T-cell (primary cell): ENCODE measurements at regions of chrX and their contacts with region 1.

Region 1: GRCh38 chrX:68828740-68829552 is at the start of gene EFNB1:
- DNase-seq: peak; percentile 62 to 90 (median 81)
- ATAC-seq: peak; percentile 89 to 94 (median 92)
- H3K4me3 ChIP-seq: peak within 1 kb of the TSS; percentile 75 to 79
- H3K4me3 Mint-ChIP-seq: peak within 1 kb of the TSS; percentile 86 to 93 (median 87)
- H3K27ac ChIP-seq: no peak within 1 kb of the TSS
- H3K27ac Mint-ChIP-seq: peak within 1 kb of the TSS; percentile 76 to 87
- H3K4me1 ChIP-seq: peaks cover 0 to 32% of the 10 kb centered on the region in 2 experiments
- H3K4me1 Mint-ChIP-seq: peaks cover 20 to 27% (median 21%) of the 10 kb centered on the region in 3 donors
- H3K27me3 ChIP-seq: peaks cover 0 to 7% of the 10 kb centered on the region in 2 experiments
- H3K27me3 Mint-ChIP-seq: no peaks in the 10 kb centered on the region
- total RNA-seq, gene EFNB1: 3.9 to 7.8 (median 7.4) TPM

Region 2: DNA sequence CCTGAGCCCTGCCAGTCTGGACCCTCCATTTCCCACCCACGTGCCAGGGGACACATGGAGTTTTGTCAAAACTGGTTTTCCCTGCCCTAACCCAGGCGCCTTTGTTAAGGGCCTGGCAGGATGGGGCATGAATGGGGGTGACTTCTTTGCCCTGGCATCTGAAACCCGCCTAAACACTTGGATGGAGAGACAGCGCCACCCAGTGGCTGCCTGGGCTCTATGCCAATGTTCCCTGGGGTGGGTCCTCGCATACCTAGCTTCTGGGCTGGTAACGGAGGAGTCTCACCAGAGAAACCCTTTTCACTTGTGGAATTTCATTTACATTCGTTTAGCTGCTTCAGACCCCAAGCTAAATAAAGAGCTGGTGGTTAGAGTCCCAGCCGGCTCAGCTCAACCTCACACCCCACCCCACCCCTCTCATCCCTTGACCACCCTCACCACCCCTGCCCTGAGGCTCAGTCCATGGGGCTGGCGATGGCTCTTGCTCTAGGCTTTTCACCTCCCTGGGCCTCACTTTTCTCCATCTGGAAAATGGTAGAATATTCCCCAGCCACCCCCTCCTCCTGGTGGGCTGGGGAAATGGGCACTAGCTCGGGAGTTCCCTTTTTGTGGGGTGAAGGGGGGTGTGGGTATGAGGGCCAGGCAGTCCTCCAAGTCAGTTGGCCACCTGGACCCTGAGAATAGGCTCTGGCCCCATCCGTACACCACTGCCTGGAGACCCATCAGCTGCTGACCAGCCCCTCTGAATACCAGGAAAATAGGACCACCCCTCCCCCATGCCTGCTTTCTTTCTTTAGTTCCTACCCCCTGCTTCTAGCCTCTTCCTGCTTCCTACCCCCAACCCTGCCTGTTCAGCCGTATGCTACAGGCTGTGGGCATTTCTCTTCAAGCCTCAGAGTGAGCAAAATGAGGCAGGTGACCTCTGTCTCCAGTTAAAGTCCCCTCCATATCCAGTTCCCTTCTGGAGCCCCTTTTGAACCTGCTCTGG is 393.5 kb after region 1 on chrX:
- CTCF ChIA-PET with region 1: interaction called, 24 to 43 read pairs
- POLR2A ChIA-PET with region 1: no interaction called
- DNase-seq: peak; percentile 39 to 81 (median 66)
- ATAC-seq: peak; percentile 54 to 86 (median 78)
- H3K4me3 ChIP-seq: no peak overlapping the region
- H3K4me3 Mint-ChIP-seq: no peak overlapping the region
- H3K27ac ChIP-seq: no peak overlapping the region
- H3K27ac Mint-ChIP-seq: no peak overlapping the region
- H3K4me1 ChIP-seq: peaks cover 0 to 8% of the 10 kb centered on the region in 2 experiments
- H3K4me1 Mint-ChIP-seq: peaks cover 0 to 4% (median 4%) of the 10 kb centered on the region in 3 donors
- H3K27me3 ChIP-seq: peaks cover 0 to 8% of the 10 kb centered on the region in 2 experiments
- H3K27me3 Mint-ChIP-seq: peaks cover 0 to 6% of the 10 kb centered on the region in 2 donors

Region 3: GRCh38 chrX:69289046-69289792 is 460.3 kb after region 1 on chrX:
- CTCF ChIA-PET with region 1: interaction called, 3 to 10 read pairs
- POLR2A ChIA-PET with region 1: no interaction called
- DNase-seq: no peak
- ATAC-seq: no peak
- H3K4me3 ChIP-seq: no peak overlapping the region
- H3K4me3 Mint-ChIP-seq: no peak overlapping the region
- H3K27ac ChIP-seq: no peak overlapping the region
- H3K27ac Mint-ChIP-seq: no peak overlapping the region
- H3K4me1 ChIP-seq: peaks cover 0 to 9% of the 10 kb centered on the region in 2 experiments
- H3K4me1 Mint-ChIP-seq: no peaks in the 10 kb centered on the region
- H3K27me3 ChIP-seq: peaks cover 0 to 13% of the 10 kb centered on the region in 2 experiments
- H3K27me3 Mint-ChIP-seq: peaks cover 0 to 15% of the 10 kb centered on the region in 2 donors

Region 4: DNA sequence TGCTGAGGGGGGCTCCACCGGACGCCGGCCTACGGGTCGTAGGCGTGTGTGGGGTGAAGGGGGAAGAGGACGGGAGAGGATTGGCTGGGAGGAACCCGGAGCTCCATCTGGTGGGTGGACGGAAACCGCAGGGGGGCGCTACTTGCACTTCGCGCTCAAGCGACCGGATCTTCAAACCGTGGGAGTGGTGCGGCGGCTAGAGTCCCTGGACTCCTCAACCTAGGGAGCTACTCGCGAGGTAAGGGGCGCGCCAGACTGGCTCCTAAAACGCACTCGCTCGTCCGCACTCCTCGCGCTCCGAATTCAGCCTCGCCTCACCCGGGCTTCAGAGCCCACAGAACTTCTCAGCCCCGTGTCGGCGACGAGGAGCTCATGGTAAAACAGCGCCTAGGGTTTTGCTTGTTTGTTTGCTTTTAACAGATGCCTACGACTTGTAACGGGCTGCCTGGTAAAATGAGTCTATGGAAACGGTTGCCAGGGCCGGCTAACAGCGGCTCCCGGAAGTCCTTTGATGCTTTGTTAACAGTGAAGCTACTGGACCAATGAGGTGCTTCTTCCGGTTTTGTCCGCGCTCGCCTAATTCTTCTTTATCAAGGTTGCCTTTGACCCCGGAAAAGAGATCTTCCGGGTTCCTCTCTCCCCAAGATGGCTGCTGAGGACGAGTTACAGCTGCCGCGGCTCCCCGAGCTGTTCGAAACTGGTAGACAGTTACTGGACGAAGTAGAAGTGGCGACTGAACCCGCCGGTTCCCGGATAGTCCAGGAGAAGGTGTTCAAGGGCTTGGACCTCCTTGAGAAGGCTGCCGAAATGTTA is 1304.6 kb after region 1 on chrX and contains the start of gene IGBP1:
- CTCF ChIA-PET with region 1: interaction called in 1 of 2 experiments, 15 read pairs
- POLR2A ChIA-PET with region 1: interaction called in 1 of 2 experiments, 6 read pairs
- DNase-seq: peak; percentile 40 to 90 (median 79)
- ATAC-seq: peak; percentile 86 to 89 (median 86)
- H3K4me3 ChIP-seq: peak within 1 kb of the TSS; percentile 77 to 90
- H3K4me3 Mint-ChIP-seq: peak within 1 kb of the TSS; percentile 86 to 98 (median 98)
- H3K27ac ChIP-seq: peak within 1 kb of the TSS; percentile 83
- H3K27ac Mint-ChIP-seq: peak within 1 kb of the TSS; percentile 97
- H3K4me1 ChIP-seq: peaks cover 10 to 17% of the 10 kb centered on the region in 2 experiments
- H3K4me1 Mint-ChIP-seq: peaks cover 26 to 47% (median 28%) of the 10 kb centered on the region in 3 donors
- H3K27me3 ChIP-seq: no peaks in the 10 kb centered on the region
- H3K27me3 Mint-ChIP-seq: peaks cover 0 to 11% of the 10 kb centered on the region in 2 donors
- total RNA-seq, gene IGBP1: 50.8 to 61.2 (median 59.1) TPM